ENCODE measurements at regions of chr17 and their contacts with region 1.

Region 1: DNA sequence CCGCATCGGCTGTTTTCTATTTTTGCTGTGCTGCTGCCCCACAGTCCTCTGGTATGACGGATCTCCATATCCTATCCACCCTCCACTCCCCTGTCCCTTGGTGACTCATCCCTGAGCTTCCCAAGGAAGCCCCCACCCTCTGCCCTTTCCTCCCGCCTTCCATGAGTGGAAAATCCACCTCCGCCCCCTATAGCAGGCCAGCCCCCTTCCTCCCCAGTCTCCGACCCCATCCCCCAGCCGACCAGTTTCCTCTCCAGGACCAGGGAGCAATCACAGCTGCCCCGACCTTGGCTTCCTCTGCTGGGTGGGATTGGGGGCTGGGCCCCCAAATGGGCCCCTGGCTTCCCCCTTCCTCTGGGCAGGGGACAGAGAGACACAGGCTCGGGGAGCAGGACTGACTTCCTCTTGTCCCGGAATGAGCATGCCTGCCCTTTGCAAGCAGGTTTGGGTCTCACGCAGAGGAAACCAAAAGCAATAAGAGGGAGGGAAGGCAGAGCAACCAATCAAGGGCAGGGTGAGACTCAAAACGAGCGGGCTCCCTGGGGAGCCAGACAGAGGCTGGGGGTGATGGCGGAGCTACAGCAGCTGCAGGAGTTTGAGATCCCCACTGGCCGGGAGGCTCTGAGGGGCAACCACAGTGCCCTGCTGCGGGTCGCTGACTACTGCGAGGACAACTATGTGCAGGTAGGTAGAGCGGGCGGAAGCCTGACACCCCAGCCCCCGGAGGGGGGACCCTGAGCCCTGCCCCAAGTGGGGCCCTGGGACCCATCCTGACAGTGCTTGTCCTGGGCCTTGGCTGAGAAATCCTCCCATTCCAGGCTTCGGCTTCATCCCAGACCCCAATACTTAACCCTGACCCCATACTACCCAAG is at the starts of genes ABI3 and GNGT2:
- DNase-seq: peak; percentile 85
- ATAC-seq: peak; percentile 88
- H3K4me3 Mint-ChIP-seq: peak within 1 kb of the TSS; percentile 79
- H3K27ac Mint-ChIP-seq: peak within 1 kb of the TSS; percentile 95
- H3K4me1 Mint-ChIP-seq: peaks cover 56% of the 10 kb centered on the region
- H3K27me3 Mint-ChIP-seq: no peaks in the 10 kb centered on the region
- CTCF ChIP-seq: no peak
- total RNA-seq, gene ABI3: 39.3 to 45.1 TPM
- total RNA-seq, gene GNGT2: 21.7 to 23.9 TPM

Region 2: DNA sequence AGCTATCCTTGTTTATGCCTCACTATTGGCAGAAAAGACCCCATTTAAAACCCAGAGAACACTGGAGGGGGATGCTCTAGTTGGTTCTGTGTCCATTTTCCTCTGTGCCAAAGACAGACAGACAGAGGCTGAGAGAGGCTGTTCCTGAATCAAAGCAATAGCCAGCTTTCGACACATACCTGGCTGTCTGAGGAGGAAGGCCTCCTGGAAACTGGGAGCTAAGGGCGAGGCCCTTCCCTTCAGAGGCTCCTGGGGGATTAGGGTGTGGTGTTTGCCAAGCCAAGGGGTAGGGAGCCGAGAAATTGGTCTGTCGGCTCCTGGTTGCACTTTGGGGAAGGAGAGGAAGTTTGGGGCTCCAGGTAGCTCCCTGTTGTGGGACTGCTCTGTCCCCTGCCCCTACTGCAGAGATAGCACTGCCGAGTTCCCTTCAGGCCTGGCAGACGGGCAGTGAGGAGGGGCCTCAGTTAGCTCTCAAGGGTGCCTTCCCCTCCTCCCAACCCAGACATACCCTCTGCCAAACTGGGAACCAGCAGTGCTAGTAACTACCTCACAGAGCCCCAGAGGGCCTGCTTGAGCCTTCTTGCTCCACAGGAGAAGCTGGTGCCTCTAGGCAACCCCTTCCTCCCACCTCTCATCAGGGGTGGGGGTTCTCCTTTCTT is 157.1 kb before region 1 on chr17:
- CTCF ChIA-PET with region 1: no interaction called
- POLR2A ChIA-PET with region 1: no interaction called
- intact Hi-C with region 1: no loop called
- DNase-seq: no peak
- ATAC-seq: no peak
- H3K4me3 Mint-ChIP-seq: no peak overlapping the region
- H3K27ac Mint-ChIP-seq: no peak overlapping the region
- H3K4me1 Mint-ChIP-seq: peaks cover 6% of the 10 kb centered on the region
- H3K27me3 Mint-ChIP-seq: no peaks in the 10 kb centered on the region
- CTCF ChIP-seq: no peak

Region 3: DNA sequence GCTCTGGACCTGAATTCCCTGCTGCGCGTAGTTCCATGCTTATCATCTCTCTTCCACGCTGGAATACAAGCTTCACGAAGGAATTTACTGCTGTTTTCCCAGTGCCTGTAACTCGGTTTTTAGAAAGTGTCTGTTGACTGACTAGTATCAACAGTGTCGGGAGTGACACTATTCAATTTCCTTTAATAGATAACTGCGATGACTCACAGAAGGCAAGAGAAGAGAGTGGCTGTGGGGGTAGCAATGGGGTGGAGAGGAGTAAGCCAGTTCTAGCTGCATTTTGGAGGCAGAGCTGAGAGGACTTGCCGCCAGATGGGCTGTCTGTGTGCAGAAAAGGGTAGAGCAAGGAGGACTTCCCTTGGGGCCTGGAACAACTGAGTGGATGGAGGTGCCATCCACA is 52.6 kb before region 1 on chr17:
- CTCF ChIA-PET with region 1: no interaction called
- POLR2A ChIA-PET with region 1: no interaction called
- intact Hi-C with region 1: no loop called
- DNase-seq: no peak
- ATAC-seq: no peak
- H3K4me3 Mint-ChIP-seq: no peak overlapping the region
- H3K27ac Mint-ChIP-seq: no peak overlapping the region
- H3K4me1 Mint-ChIP-seq: no peaks in the 10 kb centered on the region
- H3K27me3 Mint-ChIP-seq: peaks cover 22% of the 10 kb centered on the region
- CTCF ChIP-seq: no peak

Region 4: DNA sequence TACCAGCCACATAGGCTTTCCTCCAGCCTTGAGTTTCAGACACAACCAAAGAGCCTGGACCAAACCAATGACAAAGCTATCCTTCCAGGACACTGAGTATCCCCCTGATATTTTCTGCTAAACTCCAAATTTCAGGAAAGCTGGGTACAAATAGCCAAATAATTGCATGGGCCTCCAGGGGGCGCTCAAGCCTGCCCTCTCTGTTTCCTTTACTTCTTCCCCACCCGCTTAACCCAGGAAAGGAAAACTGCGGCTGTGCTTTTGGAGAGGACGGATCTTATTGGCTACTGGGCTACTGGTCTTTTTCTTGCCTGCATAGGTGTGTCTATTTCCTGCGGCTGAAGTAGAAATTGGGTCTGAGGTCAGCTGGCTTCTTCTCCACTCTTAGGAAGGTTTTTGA is 30.1 kb before region 1 on chr17:
- CTCF ChIA-PET with region 1: interaction called, 16 read pairs
- POLR2A ChIA-PET with region 1: interaction called, 3 read pairs
- intact Hi-C with region 1: no loop called
- DNase-seq: peak; percentile 82
- ATAC-seq: peak; percentile 37
- H3K4me3 Mint-ChIP-seq: no peak overlapping the region
- H3K27ac Mint-ChIP-seq: no peak overlapping the region
- H3K4me1 Mint-ChIP-seq: peaks cover 4% of the 10 kb centered on the region
- H3K27me3 Mint-ChIP-seq: no peaks in the 10 kb centered on the region
- CTCF ChIP-seq: peak; percentile 99